ENCODE measurements at regions of chr1 and their contacts with region 1.

Region 1: DNA sequence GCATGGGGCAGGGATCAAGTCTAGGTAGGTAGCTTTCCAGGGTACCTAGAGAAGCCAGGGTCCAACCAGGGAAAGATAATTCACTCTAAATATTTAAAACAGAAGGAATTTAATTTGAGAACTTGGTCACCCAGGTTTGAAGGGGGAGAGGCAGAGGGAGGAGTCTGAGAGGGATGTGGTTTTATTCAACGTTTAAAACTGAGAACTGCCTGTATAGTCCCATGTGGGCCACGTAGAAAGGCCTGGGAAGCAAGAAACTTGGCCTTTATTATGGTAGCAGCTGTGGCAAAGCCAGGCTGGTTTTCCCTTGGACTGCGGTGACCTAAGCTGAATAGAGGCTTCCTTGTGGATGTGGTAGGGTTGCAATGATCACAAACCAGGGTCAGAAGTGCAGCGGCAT is 42.0 kb upstream of the DUSP10 start:
- DNase-seq: peak in 6 of 9 donors; percentile 12 to 49 (median 34)
- ATAC-seq: peak; percentile 82
- H3K4me3 ChIP-seq: peak overlapping the region; percentile 41
- H3K4me3 Mint-ChIP-seq: peak overlapping the region; percentile 41 to 76 (median 69)
- H3K27ac ChIP-seq: no peak overlapping the region
- H3K27ac Mint-ChIP-seq: peak overlapping the region in 5 of 9 donors; percentile 17 to 54 (median 29)
- H3K4me1 ChIP-seq: peaks cover 34% of the 10 kb centered on the region in 2 donors
- H3K4me1 Mint-ChIP-seq: peaks cover 36 to 62% (median 45%) of the 10 kb centered on the region in 7 donors
- H3K27me3 ChIP-seq: no peaks in the 10 kb centered on the region
- H3K27me3 Mint-ChIP-seq: no peaks in the 10 kb centered on the region

Region 2: GRCh38 chr1:220013497-220013896 is 1770.4 kb before region 1 on chr1:
- CTCF ChIA-PET with region 1: no interaction called
- POLR2A ChIA-PET with region 1: no interaction called
- intact Hi-C with region 1: no loop called
- DNase-seq: no peak
- ATAC-seq: no peak
- H3K4me3 ChIP-seq: no peak overlapping the region
- H3K4me3 Mint-ChIP-seq: peak overlapping the region in 1 of 10 donors; percentile 43
- H3K27ac ChIP-seq: no peak overlapping the region
- H3K27ac Mint-ChIP-seq: peak overlapping the region in 3 of 9 donors; percentile 24 to 79 (median 66)
- H3K4me1 ChIP-seq: no peaks in the 10 kb centered on the region
- H3K4me1 Mint-ChIP-seq: peaks cover 0 to 34% (median 8%) of the 10 kb centered on the region in 7 donors
- H3K27me3 ChIP-seq: no peaks in the 10 kb centered on the region
- H3K27me3 Mint-ChIP-seq: no peaks in the 10 kb centered on the region

Region 3: GRCh38 chr1:220879076-220879508 is 904.8 kb before region 1 on chr1 and contains the start of gene HLX:
- CTCF ChIA-PET with region 1: no interaction called
- POLR2A ChIA-PET with region 1: no interaction called
- intact Hi-C with region 1: loop called in 1 of 2 experiments (anchors 5 kb)
- DNase-seq: peak in 1 of 9 donors; percentile 56
- ATAC-seq: peak; percentile 85
- H3K4me3 ChIP-seq: peak within 1 kb of the TSS; percentile 34
- H3K4me3 Mint-ChIP-seq: peak within 1 kb of the TSS; percentile 62 to 87 (median 81)
- H3K27ac ChIP-seq: no peak within 1 kb of the TSS
- H3K27ac Mint-ChIP-seq: peak within 1 kb of the TSS in 1 of 9 donors; percentile 76
- H3K4me1 ChIP-seq: peaks cover 0 to 9% of the 10 kb centered on the region in 2 donors
- H3K4me1 Mint-ChIP-seq: peaks cover 20 to 38% (median 35%) of the 10 kb centered on the region in 7 donors
- H3K27me3 ChIP-seq: peaks cover 0 to 16% of the 10 kb centered on the region in 2 donors
- H3K27me3 Mint-ChIP-seq: peaks cover 72 to 84% (median 73%) of the 10 kb centered on the region in 5 donors
- total RNA-seq, gene HLX: 0.27 to 11.0 (median 2.1) TPM in 4 of 5 experiments, not detected in the other

Region 4: DNA sequence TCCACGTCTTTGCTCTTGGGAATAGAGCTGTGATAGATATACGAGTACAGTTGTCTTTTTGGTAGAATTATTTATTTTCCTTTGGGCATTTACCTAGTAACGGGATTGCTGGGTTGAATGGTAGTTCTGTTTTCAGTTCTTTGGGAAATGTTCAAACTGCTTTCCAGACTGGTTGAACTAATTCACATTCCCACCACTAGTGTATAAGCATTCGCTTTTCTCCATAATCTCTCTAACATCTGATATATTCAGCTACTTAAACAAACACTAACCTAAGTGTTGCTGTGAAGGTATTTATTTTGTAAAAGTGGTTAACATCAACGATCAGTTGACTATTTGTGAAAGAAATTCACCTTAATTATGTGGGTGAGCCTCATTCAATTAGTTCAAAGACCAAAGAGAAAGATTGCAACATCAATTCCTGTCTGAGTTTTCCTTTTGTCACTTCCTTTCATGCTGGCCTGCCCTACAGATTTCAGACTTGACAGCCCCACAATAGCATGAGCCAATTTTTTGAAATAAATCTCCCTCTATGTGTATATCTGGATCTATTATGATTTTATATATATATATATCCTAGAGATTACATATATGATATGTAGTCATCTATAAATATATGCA is 15.4 kb before region 1 on chr1:
- CTCF ChIA-PET with region 1: no interaction called
- POLR2A ChIA-PET with region 1: interaction called, 3 read pairs
- intact Hi-C with region 1: loop called in 1 of 2 experiments (anchors 2 kb)
- DNase-seq: no peak
- ATAC-seq: no peak
- H3K4me3 ChIP-seq: no peak overlapping the region
- H3K4me3 Mint-ChIP-seq: no peak overlapping the region
- H3K27ac ChIP-seq: no peak overlapping the region
- H3K27ac Mint-ChIP-seq: no peak overlapping the region
- H3K4me1 ChIP-seq: no peaks in the 10 kb centered on the region
- H3K4me1 Mint-ChIP-seq: peaks cover 2 to 32% (median 6%) of the 10 kb centered on the region in 7 donors
- H3K27me3 ChIP-seq: no peaks in the 10 kb centered on the region
- H3K27me3 Mint-ChIP-seq: no peaks in the 10 kb centered on the region

Region 5: DNA sequence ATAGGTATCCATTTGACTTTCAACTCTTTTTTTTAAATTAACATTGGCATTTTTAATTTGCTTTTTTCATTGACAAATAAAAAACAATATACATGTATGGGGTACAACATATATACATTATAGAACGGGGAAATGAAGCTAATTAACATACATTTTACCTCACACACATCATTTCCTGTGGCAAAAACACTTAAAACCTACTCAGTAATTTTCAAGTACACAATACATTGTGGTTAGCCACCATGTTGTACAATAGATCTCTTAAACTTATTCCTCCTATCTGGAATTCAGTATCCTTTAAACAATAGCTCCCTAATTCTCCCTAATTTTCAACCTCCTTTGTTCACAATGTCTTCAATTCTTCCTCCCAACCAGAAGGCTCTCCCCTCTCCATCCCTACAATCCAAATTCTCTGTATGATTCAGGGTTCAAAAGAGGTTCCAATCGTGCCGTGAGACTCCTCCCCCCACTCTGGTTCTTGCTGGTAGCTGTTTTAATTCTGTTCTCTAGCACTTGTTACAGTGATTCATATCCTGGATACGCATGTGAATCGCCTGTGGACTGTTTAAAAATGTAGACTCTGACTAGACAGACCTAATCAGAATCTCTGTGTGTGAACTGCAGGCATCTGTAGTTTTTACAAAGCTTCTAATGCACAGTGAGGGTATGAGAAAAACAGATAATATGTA is 45.5 kb after region 1 on chr1:
- CTCF ChIA-PET with region 1: no interaction called
- POLR2A ChIA-PET with region 1: no interaction called
- intact Hi-C with region 1: loop called in 1 of 2 experiments (anchors 5 kb)
- DNase-seq: peak in 1 of 9 donors; percentile 42
- ATAC-seq: peak; percentile 88
- H3K4me3 ChIP-seq: peak overlapping the region; percentile 16
- H3K4me3 Mint-ChIP-seq: peak overlapping the region in 4 of 10 donors; percentile 3 to 74 (median 44)
- H3K27ac ChIP-seq: no peak overlapping the region
- H3K27ac Mint-ChIP-seq: peak overlapping the region in 3 of 9 donors; percentile 61 to 95 (median 68)
- H3K4me1 ChIP-seq: peaks cover 15 to 36% of the 10 kb centered on the region in 2 donors
- H3K4me1 Mint-ChIP-seq: peaks cover 13 to 79% (median 29%) of the 10 kb centered on the region in 7 donors
- H3K27me3 ChIP-seq: no peaks in the 10 kb centered on the region
- H3K27me3 Mint-ChIP-seq: no peaks in the 10 kb centered on the region

Measured in naive thymus-derived CD4-positive, alpha-beta T cell (primary cell).